Activated CD4-positive, alpha-beta memory T cell treated with anti-CD3 and anti-CD28 coated beads for 36 hours (primary cell): ENCODE measurements at regions of chr2 and their contacts with region 1.

Region 1: DNA sequence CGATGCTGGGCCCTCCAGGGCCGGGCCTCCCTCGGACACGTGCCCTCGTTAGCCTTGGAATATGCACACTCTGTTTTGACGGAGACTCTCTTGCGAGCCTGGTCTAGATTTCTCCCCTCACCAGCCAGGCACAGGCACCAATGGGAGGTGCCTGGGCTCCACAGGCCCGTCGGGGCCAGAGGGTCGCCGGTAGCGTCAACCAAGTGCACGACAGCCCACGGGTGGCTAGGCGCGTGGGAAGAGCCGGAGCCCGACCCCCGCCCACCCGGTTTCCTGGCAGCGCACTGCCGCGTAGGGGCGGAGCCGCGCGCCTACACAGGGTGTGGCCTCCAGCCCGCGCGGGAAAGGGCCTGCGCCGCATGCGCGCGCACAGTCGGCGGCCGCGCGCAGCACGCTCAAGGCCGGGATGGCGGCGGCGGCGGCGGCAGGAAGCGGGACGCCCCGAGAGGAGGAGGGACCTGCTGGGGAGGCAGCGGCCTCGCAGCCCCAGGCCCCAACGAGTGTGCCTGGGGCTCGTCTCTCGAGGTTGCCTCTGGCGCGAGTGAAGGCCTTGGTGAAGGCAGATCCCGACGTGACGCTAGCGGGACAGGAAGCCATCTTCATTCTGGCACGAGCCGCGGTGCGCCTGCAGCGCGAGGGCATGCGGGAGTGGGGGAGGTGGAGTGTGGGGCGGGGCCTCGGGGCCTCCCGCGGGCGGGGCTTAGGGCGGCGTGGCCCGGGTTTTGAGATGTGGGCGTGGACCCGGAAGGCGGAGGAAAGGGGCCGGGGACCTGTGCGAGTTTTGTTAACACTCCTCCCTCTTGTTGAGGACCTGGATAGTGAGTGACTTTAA is at the start of gene POLE4:
- DNase-seq: peak; percentile 97
- H3K4me3 Mint-ChIP-seq: peak within 1 kb of the TSS; percentile 79
- H3K27ac Mint-ChIP-seq: peak within 1 kb of the TSS; percentile 87
- H3K4me1 Mint-ChIP-seq: peaks cover 64% of the 10 kb centered on the region
- H3K27me3 Mint-ChIP-seq: no peaks in the 10 kb centered on the region
- total RNA-seq, gene POLE4: 54.6 to 58.0 TPM

Region 2: GRCh38 chr2:75646583-75647425 is 688.3 kb after region 1 on chr2 and contains the start of gene MRPL19:
- CTCF ChIA-PET with region 1: no interaction called
- POLR2A ChIA-PET with region 1: no interaction called
- intact Hi-C with region 1: loop called (anchors 10 kb)
- DNase-seq: peak; percentile 83
- H3K4me3 Mint-ChIP-seq: peak within 1 kb of the TSS; percentile 90
- H3K27ac Mint-ChIP-seq: peak within 1 kb of the TSS; percentile 84
- H3K4me1 Mint-ChIP-seq: peaks cover 30% of the 10 kb centered on the region
- H3K27me3 Mint-ChIP-seq: no peaks in the 10 kb centered on the region
- total RNA-seq, gene MRPL19: 61.2 to 64.6 TPM

Region 3: DNA sequence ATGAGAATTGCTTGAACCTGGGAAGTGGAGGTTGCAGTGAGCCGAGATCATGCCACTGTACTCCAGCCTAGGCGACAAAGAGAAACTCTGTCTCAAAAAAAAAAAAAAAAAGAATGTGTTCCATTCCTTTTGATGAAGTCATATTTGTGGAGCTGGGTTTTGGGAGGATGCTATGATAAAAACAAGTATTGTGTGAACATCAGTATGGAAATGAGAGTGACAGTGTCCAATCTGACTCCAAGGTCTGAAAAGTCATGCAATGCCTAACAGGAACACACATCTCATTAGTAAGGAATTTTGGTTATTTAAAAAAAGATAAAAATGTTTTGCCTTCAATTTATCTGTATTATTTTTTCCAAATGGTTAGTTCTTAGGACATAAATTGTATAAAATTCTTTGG is 740.4 kb after region 1 on chr2:
- CTCF ChIA-PET with region 1: no interaction called
- POLR2A ChIA-PET with region 1: no interaction called
- intact Hi-C with region 1: no loop called
- DNase-seq: no peak
- H3K4me3 Mint-ChIP-seq: no peak overlapping the region
- H3K27ac Mint-ChIP-seq: no peak overlapping the region
- H3K4me1 Mint-ChIP-seq: no peaks in the 10 kb centered on the region
- H3K27me3 Mint-ChIP-seq: no peaks in the 10 kb centered on the region

Region 4: DNA sequence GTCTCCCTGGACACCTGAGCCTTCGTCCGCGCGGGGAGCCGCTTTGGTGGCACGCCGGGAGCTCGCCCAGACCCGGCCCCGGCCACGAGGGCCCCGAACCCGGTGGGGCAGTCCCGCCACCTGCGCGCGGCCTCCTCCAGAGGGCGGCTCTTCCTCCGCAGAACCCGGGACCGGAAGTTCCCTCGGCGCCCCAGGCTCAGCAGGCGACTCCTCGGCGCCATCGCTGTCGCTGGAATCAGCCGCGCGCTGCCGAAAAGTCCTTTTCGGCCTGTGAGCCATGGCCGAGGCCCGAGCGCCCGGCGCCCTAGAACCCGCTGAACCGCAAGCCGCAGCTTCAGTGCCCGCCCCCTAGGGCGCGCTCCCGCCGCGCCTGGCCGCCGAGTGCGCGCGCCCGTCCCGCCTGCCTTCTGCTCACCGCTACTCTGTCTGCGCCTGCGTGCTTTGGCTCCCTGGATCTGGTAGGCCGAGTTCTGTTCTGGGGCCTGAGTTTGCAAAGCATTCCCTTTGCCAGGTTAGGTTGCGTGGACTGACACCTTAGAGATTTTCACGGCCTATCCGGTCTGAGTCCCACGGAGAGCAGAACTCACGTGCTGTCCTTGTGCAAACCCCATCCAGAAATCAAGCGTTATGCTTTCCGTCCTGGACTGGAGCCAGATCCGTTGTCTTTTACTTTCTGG is 752.2 kb after region 1 on chr2 and contains the start of gene GCFC2:
- CTCF ChIA-PET with region 1: no interaction called
- POLR2A ChIA-PET with region 1: no interaction called
- intact Hi-C with region 1: loop called (anchors 2 kb)
- DNase-seq: peak; percentile 89
- H3K4me3 Mint-ChIP-seq: peak within 1 kb of the TSS; percentile 91
- H3K27ac Mint-ChIP-seq: peak within 1 kb of the TSS; percentile 95
- H3K4me1 Mint-ChIP-seq: peaks cover 30% of the 10 kb centered on the region
- H3K27me3 Mint-ChIP-seq: peaks cover 2% of the 10 kb centered on the region
- total RNA-seq, gene GCFC2: 29.2 to 30.7 TPM